ENCODE measurements at regions of chr19 and their contacts with region 1.

Region 1: GRCh38 chr19:9075064-9075949 is 11.6 kb upstream of the OR1M1 start:
- DNase-seq: peak; percentile 84 to 96 (median 90)
- ATAC-seq: peak; percentile 99
- H3K4me3 ChIP-seq: no peak overlapping the region
- H3K27ac ChIP-seq: no peak overlapping the region; the same call in 2 of the 3 replicates
- H3K4me1 ChIP-seq: peaks cover 12 to 17% of the 10 kb centered on the region in 2 experiments; a peak in 4 of 5 replicates
- H3K27me3 ChIP-seq: no peaks in the 10 kb centered on the region
- CTCF ChIP-seq: no peak
- EP300 ChIP-seq: peak; percentile 74
- POLR2A ChIP-seq: no peak
- RAD21 ChIP-seq: no peak; a peak in 1 of 4 replicates

Region 2: GRCh38 chr19:8641908-8642547 is 433.3 kb before region 1 on chr19:
- CTCF ChIA-PET with region 1: no interaction called
- POLR2A ChIA-PET with region 1: no interaction called
- in situ Hi-C with region 1: loop called (anchors 5 kb)
- intact Hi-C with region 1: no loop called
- DNase-seq: peak; percentile 47 to 57 (median 53)
- ATAC-seq: peak; percentile 73
- H3K4me3 ChIP-seq: no peak overlapping the region
- H3K27ac ChIP-seq: no peak overlapping the region
- H3K4me1 ChIP-seq: no peaks in the 10 kb centered on the region
- H3K27me3 ChIP-seq: peaks cover 3 to 17% of the 10 kb centered on the region in 2 experiments; a peak in 3 of 5 replicates
- CTCF ChIP-seq: peak; percentile 48 to 62 (median 60)
- EP300 ChIP-seq: no peak
- POLR2A ChIP-seq: no peak
- RAD21 ChIP-seq: peak; percentile 22 to 49; a peak in 2 of 4 replicates

Measured in K562 (cell line).